Activated B cell treated with CpG ODN at 0.5 μM for 24 hours (primary cell): ENCODE measurements at regions of chr7 and their contacts with region 1.

Region 1: GRCh38 chr7:101085162-101085987 is at the start of gene TRIM56:
- DNase-seq: peak; percentile 69
- ATAC-seq: peak; percentile 99
- H3K4me3 Mint-ChIP-seq: peak within 1 kb of the TSS; percentile 99
- H3K27ac Mint-ChIP-seq: peak within 1 kb of the TSS; percentile 97
- H3K4me1 Mint-ChIP-seq: peaks cover 24% of the 10 kb centered on the region
- H3K27me3 Mint-ChIP-seq: no peaks in the 10 kb centered on the region
- CTCF ChIP-seq: no peak
- total RNA-seq, gene TRIM56: 53.0 and 57.5 TPM in 2 replicates

Region 2: DNA sequence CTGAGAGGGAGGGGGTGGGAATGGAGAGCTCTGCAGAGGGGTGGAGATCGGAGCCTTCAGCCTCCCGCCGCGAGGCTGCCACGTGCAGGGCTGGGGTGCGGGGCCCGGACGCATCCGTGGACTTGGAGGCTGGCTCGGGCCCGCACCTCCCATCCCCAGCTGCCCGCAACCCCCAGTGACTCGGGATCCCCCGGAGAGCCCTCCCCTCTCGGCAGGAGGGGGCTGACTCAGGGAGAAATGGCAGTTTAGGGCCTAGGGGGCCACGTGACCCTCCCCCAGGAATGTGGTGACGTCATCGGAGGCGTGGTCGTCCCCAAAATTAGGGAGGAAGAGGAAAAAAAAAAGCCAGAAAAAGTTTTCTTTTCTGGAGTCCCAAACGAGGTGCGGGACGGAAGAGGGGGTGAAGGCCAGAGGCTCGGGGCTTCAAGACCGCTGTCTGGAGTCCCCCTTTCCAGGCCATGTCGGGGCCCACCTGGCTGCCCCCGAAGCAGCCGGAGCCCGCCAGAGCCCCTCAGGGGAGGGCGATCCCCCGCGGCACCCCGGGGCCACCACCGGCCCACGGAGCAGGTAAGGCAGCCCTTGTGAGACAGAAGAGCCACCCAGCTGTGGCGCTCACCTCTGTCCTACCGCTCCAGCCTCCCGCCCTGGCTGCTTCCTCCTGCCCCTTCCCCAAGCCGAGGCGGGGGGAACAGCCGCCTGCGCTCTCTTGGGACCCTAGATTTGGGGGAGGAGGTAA is 218.2 kb before region 1 on chr7 and contains the start of gene TRIP6:
- CTCF ChIA-PET with region 1: no interaction called
- POLR2A ChIA-PET with region 1: interaction called, 15 read pairs
- intact Hi-C with region 1: no loop called
- DNase-seq: no peak
- ATAC-seq: peak; percentile 59
- H3K4me3 Mint-ChIP-seq: peak within 1 kb of the TSS; percentile 85
- H3K27ac Mint-ChIP-seq: peak within 1 kb of the TSS; percentile 85
- H3K4me1 Mint-ChIP-seq: peaks cover 22% of the 10 kb centered on the region
- H3K27me3 Mint-ChIP-seq: no peaks in the 10 kb centered on the region
- CTCF ChIP-seq: no peak
- total RNA-seq, gene TRIP6: 12.6 and 16.9 TPM in 2 replicates

Region 3: DNA sequence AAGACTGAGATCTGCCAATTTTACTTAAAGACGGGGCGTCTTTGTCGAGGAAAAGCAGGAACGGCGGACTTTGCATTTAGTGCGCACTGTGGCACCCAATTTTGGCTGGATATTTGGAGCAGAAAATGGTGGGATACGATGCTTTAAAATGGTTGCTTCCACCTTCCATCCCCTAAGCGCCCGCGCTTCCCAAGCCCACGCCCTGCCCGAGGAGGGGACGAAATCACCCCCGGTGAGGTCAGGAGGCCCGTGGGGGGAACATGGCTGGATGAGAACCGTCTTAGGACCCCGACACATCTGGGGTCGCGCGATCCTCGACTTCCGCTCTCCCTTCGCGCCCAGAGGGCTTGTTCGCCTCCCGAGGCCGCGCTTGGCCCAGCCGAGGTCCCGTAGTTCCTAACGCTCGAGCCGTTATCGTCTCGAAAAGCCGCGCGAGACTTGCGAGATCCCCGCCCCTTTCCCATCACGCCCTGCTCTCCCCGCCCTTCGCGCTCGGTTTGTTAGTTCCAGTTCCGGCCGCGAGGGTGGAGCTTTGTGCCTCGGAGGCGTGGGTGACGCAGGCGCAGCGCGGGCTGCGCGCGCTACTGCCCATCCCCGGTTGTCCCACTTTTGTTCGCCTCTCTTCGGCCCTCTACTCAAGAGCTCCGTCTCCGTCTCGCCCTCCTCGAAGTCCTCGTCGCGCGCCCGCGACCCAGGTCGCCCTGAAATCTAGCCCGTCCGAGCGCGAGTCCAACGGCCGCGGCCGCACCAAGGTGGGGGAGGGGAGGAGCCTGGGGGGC is 210.6 kb before region 1 on chr7 and contains the start of gene SRRT:
- CTCF ChIA-PET with region 1: no interaction called
- POLR2A ChIA-PET with region 1: interaction called, 18 read pairs
- intact Hi-C with region 1: no loop called
- DNase-seq: peak; percentile 96
- ATAC-seq: peak; percentile 96
- H3K4me3 Mint-ChIP-seq: peak within 1 kb of the TSS; percentile 99
- H3K27ac Mint-ChIP-seq: peak within 1 kb of the TSS; percentile 98
- H3K4me1 Mint-ChIP-seq: peaks cover 45% of the 10 kb centered on the region
- H3K27me3 Mint-ChIP-seq: no peaks in the 10 kb centered on the region
- CTCF ChIP-seq: no peak
- total RNA-seq, gene SRRT: 229 and 244 TPM in 2 replicates

Region 4: DNA sequence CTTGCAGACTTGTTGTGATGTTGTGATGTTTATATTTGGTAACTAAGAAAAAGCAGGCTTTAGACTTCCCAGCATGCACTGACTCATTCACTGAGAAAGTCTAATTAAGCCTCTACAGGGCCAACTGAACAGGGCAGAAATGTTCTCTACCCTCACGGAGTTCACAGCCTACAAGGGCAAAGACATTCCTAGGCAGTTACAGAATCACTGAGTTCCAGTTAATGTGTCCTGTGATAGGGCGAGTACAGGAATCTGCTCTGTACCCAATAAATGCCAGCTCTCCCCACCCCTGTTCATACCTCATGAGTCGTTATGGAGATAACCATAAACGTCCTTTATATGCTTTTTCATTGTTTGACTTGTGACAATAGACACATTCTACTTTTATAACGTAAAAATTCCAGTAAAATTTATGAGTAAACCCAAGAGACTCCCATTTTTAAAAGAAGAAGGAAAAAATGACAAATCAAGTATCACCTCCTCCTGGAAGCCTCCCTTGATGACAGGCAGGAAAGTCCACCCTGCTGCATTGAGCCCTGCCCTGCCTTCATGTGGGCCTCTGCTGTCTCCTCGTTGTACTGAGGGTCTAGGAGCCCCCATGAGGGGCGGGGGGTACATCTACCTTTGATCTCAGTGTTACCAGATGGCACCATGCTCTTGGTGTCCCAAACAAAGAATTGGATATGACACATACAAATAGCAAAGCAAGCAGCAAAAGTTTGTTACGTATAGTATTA is 101.8 kb before region 1 on chr7:
- CTCF ChIA-PET with region 1: no interaction called
- POLR2A ChIA-PET with region 1: no interaction called
- intact Hi-C with region 1: no loop called
- DNase-seq: no peak
- ATAC-seq: no peak
- H3K4me3 Mint-ChIP-seq: no peak overlapping the region
- H3K27ac Mint-ChIP-seq: no peak overlapping the region
- H3K4me1 Mint-ChIP-seq: no peaks in the 10 kb centered on the region
- H3K27me3 Mint-ChIP-seq: peaks cover 25% of the 10 kb centered on the region
- CTCF ChIP-seq: no peak

Region 5: GRCh38 chr7:101185258-101185839 is 100.0 kb after region 1 on chr7:
- CTCF ChIA-PET with region 1: no interaction called
- POLR2A ChIA-PET with region 1: interaction called, 3 read pairs
- intact Hi-C with region 1: loop called (anchors 5 kb)
- DNase-seq: no peak
- ATAC-seq: no peak
- H3K4me3 Mint-ChIP-seq: no peak overlapping the region
- H3K27ac Mint-ChIP-seq: no peak overlapping the region
- H3K4me1 Mint-ChIP-seq: peaks cover 6% of the 10 kb centered on the region
- H3K27me3 Mint-ChIP-seq: peaks cover 21% of the 10 kb centered on the region
- CTCF ChIP-seq: no peak